Activated B cell treated with CpG ODN at 0.5 μM for 24 hours (primary cell): ENCODE measurements at regions of chr11 and their contacts with region 1.

Region 1: DNA sequence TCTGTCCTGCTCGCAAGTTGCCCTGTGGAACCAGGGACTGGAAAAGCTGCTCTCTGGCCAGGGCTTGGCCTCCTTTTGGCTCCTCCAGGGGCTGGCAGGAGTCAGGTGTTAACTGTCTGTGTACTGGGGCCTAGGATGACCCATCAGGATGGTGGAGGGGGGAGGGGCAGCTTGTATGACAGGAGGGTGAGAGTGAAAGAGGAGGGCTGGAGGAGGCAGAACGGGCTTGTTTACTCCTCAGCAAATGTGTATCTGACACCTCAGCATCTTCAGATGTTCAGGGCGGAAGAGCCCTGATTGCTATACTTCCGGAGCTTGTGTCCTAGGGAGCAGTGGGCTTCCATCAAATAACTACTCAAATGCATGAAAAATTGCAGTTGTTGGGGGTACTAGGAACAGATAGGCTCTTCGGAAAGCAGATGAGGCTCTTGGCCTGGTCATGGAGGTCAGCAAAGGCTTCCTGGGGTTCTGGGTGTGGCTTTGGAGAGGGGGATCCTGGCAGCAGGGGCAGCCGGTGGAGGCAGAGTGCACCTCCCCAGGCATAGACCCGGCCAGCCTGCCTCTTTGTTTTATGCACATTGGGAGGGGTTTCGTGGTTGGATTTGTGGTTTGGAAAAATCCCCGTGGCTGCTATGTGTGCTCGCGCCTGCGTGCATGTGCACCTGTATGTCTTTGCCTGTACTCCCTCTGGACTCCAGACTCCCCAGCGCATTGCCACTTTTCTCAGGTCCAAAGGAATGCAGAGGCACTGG is 31.2 kb downstream of the CD82 start:
- DNase-seq: peak; percentile 69
- ATAC-seq: peak; percentile 30
- H3K4me3 Mint-ChIP-seq: peak overlapping the region; percentile 82
- H3K27ac Mint-ChIP-seq: peak overlapping the region; percentile 94
- H3K4me1 Mint-ChIP-seq: peaks cover 95% of the 10 kb centered on the region
- H3K27me3 Mint-ChIP-seq: no peaks in the 10 kb centered on the region
- CTCF ChIP-seq: no peak

Region 2: DNA sequence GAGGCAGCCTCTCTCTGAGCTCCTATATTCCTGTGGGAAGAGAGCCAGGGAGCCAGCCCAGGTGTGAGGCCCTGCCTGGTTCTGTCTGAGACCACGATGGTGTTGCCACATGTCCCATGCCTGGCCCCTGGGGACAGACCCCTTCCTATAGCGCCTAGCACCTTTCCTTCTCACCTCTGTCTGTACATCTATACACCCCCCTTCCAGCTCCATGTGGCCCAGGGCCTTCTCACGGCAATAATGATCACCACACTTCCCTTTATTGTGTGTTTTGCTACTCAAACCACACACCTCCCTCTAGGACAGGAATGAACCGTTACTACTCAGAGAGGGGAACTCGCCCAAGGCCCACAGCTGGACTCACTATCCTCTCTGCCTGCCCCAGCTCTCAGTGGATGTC is 18.4 kb before region 1 on chr11:
- CTCF ChIA-PET with region 1: interaction called, 3 read pairs
- POLR2A ChIA-PET with region 1: interaction called, 485 read pairs
- intact Hi-C with region 1: no loop called
- DNase-seq: no peak
- ATAC-seq: peak; percentile 51
- H3K4me3 Mint-ChIP-seq: peak overlapping the region; percentile 55
- H3K27ac Mint-ChIP-seq: peak overlapping the region; percentile 69
- H3K4me1 Mint-ChIP-seq: peaks cover 93% of the 10 kb centered on the region
- H3K27me3 Mint-ChIP-seq: no peaks in the 10 kb centered on the region
- CTCF ChIP-seq: no peak

Region 3: GRCh38 chr11:44983786-44984185 is 387.1 kb after region 1 on chr11:
- CTCF ChIA-PET with region 1: no interaction called
- POLR2A ChIA-PET with region 1: interaction called, 10 read pairs
- intact Hi-C with region 1: no loop called
- DNase-seq: peak; percentile 15
- ATAC-seq: peak; percentile 56
- H3K4me3 Mint-ChIP-seq: no peak overlapping the region
- H3K27ac Mint-ChIP-seq: peak overlapping the region; percentile 54
- H3K4me1 Mint-ChIP-seq: peaks cover 34% of the 10 kb centered on the region
- H3K27me3 Mint-ChIP-seq: no peaks in the 10 kb centered on the region
- CTCF ChIP-seq: no peak